ENCODE measurements at regions of chr22 and their contacts with region 1.

Region 1: GRCh38 chr22:41596776-41597634 is 7.4 kb upstream of the PMM1 start:
- DNase-seq: peak; percentile 34 to 64
- ATAC-seq: peak; percentile 68 to 92 (median 87)
- H3K4me3 ChIP-seq: no peak overlapping the region
- H3K27ac ChIP-seq: peak overlapping the region in 9 of 10 donors; percentile 16 to 72 (median 61)
- H3K4me1 ChIP-seq: peaks cover 0 to 14% (median 10%) of the 10 kb centered on the region in 9 donors
- H3K27me3 ChIP-seq: no peaks in the 10 kb centered on the region
- CTCF ChIP-seq: peak; percentile 39 to 76 (median 71)

Region 2: DNA sequence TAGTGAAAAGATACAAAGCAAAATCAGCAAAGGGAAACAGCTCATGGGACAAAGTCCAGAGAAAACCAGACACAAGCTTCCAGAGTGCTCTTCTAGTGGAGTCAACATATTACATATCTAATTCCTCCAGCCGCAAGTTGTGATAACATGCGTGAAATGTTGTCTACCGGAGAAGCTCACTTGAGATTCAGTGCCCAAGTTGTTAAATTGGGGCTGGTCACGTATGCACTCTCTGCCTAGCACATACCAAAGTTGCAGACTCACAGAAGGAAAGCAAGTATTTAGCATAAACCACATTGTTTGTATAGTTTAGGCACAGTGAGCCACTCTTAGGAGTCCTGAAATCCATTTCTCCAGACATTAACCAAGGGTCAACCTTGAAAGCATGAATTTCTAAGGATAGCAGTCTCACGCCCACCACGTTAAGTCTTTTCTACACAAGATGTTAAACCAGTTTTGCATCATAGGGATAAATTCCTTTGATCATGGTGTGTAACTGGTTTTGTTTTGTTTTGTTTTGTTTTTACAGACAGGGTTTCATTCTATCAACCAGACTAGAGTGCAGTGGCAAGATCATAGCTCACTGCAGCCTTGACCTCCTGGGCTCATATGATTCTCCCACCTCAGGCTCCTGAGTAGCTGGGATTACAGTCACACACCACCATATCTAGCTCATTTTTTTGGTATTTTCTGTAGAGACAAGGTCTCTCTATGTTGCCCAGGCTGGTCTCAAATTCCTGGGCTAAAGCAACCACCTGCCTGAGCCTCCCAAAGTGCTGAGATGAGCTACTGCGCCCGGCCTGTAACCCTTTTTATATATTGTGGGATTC is 544.1 kb before region 1 on chr22:
- intact Hi-C with region 1: no loop called
- DNase-seq: no peak
- ATAC-seq: no peak
- H3K4me3 ChIP-seq: no peak overlapping the region
- H3K27ac ChIP-seq: no peak overlapping the region
- H3K4me1 ChIP-seq: peaks cover 0 to 15% (median 12%) of the 10 kb centered on the region in 9 donors
- H3K27me3 ChIP-seq: no peaks in the 10 kb centered on the region
- CTCF ChIP-seq: no peak

Region 3: GRCh38 chr22:41436322-41437113 is 160.5 kb before region 1 on chr22:
- intact Hi-C with region 1: no loop called
- DNase-seq: no peak
- ATAC-seq: peak in 5 of 8 donors; percentile 16 to 38 (median 28)
- H3K4me3 ChIP-seq: no peak overlapping the region
- H3K27ac ChIP-seq: peak overlapping the region in 4 of 10 donors; percentile 1 to 53 (median 24)
- H3K4me1 ChIP-seq: peaks cover 21 to 88% (median 67%) of the 10 kb centered on the region in 9 donors
- H3K27me3 ChIP-seq: no peaks in the 10 kb centered on the region
- CTCF ChIP-seq: no peak

Region 4: GRCh38 chr22:41551877-41552582 is 45.0 kb before region 1 on chr22:
- intact Hi-C with region 1: loop called in 5 of 10 experiments (anchors 2 to 10 kb)
- DNase-seq: no peak
- ATAC-seq: no peak
- H3K4me3 ChIP-seq: no peak overlapping the region
- H3K27ac ChIP-seq: no peak overlapping the region
- H3K4me1 ChIP-seq: peaks cover 3 to 16% (median 8%) of the 10 kb centered on the region in 9 donors
- H3K27me3 ChIP-seq: no peaks in the 10 kb centered on the region
- CTCF ChIP-seq: no peak

Measured in heart right ventricle (tissue), 16 donors.